HAP-1 (cell line): ENCODE measurements at regions of chr5 and their contacts with region 1.

Region 1: DNA sequence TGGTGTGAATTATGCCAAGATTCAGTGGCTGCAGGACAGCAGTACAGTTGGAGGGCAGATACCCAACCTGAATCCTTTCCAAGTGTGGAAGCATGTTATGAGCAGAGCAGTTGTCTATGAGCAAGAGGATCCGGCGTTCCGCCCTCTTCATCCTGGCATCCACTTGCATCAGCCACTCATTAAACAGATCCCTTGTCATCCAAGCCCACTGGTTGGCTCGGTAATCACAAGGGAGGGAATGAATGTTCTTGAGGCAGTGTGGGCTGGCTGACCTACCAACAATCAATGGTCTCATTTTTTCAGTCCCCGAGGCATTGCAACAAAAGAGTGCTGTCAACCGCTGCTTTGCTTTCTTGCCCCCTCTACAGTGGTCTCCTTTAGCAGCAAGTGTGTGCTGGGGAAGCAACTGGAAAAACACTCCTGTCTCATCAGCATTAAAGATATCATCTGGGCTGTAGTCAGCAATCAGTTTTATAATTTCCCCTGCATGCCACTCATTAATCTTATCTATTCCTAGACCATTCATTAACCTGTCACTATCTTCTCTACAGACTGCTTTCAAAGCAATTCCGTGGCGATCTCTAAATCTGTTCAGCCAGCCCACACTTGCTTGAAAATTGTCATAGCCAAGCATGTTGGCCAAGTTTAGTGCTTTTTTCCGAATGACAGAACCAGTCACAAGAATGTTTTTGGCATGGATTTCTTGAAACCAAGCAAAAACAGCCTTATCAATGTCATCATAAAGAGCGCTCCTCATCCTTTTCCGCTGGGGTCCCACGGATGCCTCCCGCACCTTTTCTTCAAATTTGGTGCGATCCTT is 4.9 kb downstream of the TIGD6 start:
- DNase-seq: no peak
- H3K4me3 ChIP-seq: no peak overlapping the region
- H3K4me1 ChIP-seq: peaks cover 2% of the 10 kb centered on the region; the same call in 1 of the 2 replicates
- H3K27me3 ChIP-seq: no peaks in the 10 kb centered on the region

Region 2: GRCh38 chr5:149837680-149838269 is 157.8 kb before region 1 on chr5:
- in situ Hi-C with region 1: loop called (anchors 5 kb)
- DNase-seq: peak; percentile 25 to 66
- H3K4me3 ChIP-seq: no peak overlapping the region
- H3K4me1 ChIP-seq: no peaks in the 10 kb centered on the region
- H3K27me3 ChIP-seq: no peaks in the 10 kb centered on the region